Activated T-helper 1 cell treated with anti-CD3 and anti-CD28 coated beads, Interleukin-12 subunit alpha, Interleukin-12 subunit beta, Interleukin-2, Interleukin-4 antibody, amounts not matched to agents 30 ng/mL and 10 ng/mL and 1 ng/mL, durations not matched to agents 14 hours and 24 hours and 36 hours (primary cell): ENCODE measurements at regions of chr3 and their contacts with region 1.

Region 1: DNA sequence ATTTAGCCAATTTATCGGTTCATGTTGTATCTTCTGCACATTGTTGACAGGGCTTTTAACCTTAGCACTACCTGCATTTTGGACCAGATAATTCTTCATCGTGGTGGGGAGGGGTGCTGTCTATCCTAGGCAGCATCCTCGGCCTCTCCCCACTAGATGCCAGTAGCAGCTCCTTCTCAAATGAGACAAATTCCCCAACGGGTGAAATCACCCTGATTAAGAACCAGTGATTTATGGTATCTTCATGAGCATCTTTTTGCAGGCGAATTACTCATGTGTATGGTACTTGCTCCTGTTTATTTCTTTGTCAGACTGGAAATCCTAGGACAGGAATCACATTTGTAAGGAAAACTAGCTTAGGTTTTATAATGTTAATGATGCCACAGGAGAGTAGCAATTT is 68.0 kb downstream of the C3orf70 start:
- DNase-seq: no peak
- H3K4me3 Mint-ChIP-seq: no peak overlapping the region
- H3K27ac Mint-ChIP-seq: no peak overlapping the region
- H3K4me1 Mint-ChIP-seq: no peaks in the 10 kb centered on the region
- H3K27me3 Mint-ChIP-seq: peaks cover 10% of the 10 kb centered on the region

Region 2: GRCh38 chr3:185065059-185065458 is 19.8 kb before region 1 on chr3:
- intact Hi-C with region 1: no loop called
- DNase-seq: no peak
- H3K4me3 Mint-ChIP-seq: no peak overlapping the region
- H3K27ac Mint-ChIP-seq: no peak overlapping the region
- H3K4me1 Mint-ChIP-seq: no peaks in the 10 kb centered on the region
- H3K27me3 Mint-ChIP-seq: peaks cover 3% of the 10 kb centered on the region

Region 3: GRCh38 chr3:185176750-185177359 is 92.0 kb after region 1 on chr3:
- intact Hi-C with region 1: loop called (anchors 5 kb)
- DNase-seq: no peak
- H3K4me3 Mint-ChIP-seq: no peak overlapping the region
- H3K27ac Mint-ChIP-seq: no peak overlapping the region
- H3K4me1 Mint-ChIP-seq: no peaks in the 10 kb centered on the region
- H3K27me3 Mint-ChIP-seq: no peaks in the 10 kb centered on the region